ENCODE measurements at regions of chr1 and their contacts with region 1.

Region 1: GRCh38 chr1:161805399-161806197 is 39.5 kb downstream of the ATF6 start:
- DNase-seq: no peak
- ATAC-seq: no peak
- H3K4me3 ChIP-seq: no peak overlapping the region
- H3K27ac ChIP-seq: no peak overlapping the region
- H3K4me1 ChIP-seq: no peaks in the 10 kb centered on the region
- H3K27me3 ChIP-seq: no peaks in the 10 kb centered on the region
- CTCF ChIP-seq: no peak
- EP300 ChIP-seq: no peak
- POLR2A ChIP-seq: no peak
- RAD21 ChIP-seq: no peak

Region 2: DNA sequence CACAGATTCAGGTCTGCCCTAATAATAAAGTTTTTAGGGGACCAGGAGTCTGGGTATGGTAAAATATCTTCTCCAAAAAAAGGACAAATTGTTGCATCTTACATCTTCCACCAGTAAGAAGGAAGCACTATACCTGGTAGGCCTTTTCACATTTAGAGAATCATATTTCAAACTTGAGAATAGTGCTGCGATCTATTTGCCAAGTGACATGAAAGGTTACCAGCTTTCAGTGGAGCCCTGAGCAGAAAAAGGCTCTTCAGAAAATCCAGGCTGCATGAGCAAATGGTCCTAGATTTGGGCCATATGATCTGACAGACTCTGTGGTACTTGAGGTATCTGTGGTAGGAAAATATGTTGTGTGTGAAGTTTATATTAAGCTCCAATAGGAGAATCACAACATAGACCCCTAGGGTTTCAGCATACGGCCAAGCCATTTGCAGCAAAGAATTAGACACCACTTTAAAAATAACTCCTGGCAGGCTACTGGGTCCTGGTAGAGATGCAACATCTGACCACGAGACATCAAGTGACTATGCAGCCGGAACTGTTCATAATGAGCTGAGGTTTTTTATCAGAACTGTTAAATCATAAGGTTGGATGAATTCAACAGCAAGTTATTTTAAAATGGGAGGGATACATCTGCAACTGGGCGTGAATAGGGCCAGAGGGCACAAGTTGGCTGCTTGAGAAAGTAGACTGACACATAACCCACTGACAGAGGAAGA is 1094.0 kb after region 1 on chr1:
- CTCF ChIA-PET with region 1: no interaction called
- POLR2A ChIA-PET with region 1: no interaction called
- in situ Hi-C with region 1: no loop called
- intact Hi-C with region 1: loop called (anchors 5 kb)
- DNase-seq: no peak
- ATAC-seq: no peak
- H3K4me3 ChIP-seq: no peak overlapping the region
- H3K27ac ChIP-seq: no peak overlapping the region
- H3K4me1 ChIP-seq: peaks cover 2% of the 10 kb centered on the region
- H3K27me3 ChIP-seq: peaks cover 0 to 5% of the 10 kb centered on the region in 2 experiments; a peak in 2 of 5 replicates
- CTCF ChIP-seq: no peak
- EP300 ChIP-seq: no peak
- POLR2A ChIP-seq: no peak
- RAD21 ChIP-seq: no peak